ENCODE measurements at regions of chr5 and their contacts with region 1.

Region 1: GRCh38 chr5:33997331-33997983 is 10.4 kb downstream of the AMACR start:
- DNase-seq: peak; percentile 59
- H3K4me3 ChIP-seq: no peak overlapping the region
- CTCF ChIP-seq: peak; percentile 59

Region 2: DNA sequence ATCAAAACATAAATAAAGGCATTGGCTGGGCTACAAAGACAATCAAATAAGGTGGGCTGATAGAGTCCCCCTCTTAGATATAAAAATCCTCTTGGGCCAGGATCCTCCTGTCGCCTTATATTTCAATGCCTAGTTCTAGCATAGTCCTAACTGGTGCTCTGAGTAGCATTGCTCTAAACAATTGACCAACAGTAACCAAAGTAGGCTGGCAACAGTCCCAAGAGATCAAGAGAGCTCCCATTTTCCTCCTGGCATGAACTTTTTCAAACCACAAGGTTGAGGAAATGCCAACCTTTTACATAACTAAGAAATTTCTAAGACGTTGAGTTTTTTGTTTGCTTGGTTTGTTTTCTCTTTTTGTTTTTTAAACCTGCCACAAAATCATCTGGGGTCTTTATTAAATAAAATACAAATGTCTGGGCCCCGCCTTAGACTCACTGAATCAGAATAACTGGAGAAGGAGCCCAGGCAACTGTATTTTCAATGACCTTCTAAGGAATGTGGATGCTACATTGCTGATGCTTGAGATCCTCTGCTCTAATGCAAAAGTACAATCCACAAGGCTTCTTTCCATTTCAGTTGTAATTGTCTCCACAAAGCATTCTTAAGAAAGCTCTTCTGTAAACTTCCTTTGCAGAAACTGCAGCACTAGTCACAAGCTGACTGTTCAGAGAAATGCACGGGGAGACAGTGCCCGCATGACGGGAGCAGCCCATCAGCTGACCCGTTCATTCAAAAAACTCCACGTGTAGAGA is 15.9 kb before region 1 on chr5:
- CTCF ChIA-PET with region 1: interaction called, 26 read pairs
- POLR2A ChIA-PET with region 1: no interaction called
- DNase-seq: no peak
- H3K4me3 ChIP-seq: no peak overlapping the region
- CTCF ChIP-seq: no peak

Region 3: DNA sequence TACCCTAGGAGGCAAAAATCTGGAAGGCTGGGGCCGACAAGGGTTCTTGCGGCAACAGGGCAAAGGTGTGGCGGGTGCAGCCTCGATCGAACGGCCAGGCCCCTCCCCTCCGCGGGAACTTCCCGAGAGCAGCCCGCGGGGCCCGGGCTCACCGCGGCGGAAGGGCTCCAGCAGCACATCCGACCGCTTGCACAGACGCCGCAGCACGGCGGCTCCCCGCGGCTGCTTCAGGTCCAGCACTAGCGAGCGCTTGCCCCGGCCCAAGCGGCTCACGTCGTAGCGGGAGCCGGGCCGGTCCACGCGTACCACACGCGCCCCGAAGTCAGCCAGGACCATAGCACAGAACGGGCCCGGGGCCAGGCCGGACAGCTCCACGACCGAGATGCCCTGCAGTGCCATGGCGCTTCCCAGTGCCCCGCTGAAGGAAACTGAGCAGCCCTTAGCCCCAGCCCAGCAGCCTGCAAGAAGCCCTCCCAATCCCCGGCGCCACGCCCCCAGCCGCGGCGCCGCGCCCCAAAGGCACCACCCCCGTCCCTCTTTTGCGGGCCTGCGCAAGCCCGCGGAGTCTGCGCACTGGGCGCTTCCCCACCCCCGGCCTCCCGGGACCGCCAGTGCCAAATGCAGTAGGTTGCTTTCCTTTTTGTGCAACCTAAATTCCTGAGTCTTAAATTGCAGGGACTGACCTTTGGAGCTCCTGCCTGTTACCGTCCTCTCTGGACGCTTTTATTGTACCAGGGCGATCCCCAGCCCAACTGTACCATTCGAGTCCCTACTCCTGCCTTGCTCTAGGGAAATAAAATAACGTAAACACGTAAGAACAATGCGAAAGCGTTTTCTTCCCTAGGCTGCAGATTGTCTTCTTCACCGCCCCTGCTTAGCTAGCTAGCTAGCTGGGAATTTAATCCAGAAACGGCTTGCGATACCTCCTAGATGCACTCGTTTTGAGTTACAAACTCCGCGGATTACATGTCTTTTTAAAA is 10.5 kb after region 1 on chr5 and contains the start of gene AMACR:
- CTCF ChIA-PET with region 1: interaction called, 36 read pairs
- POLR2A ChIA-PET with region 1: interaction called, 9 read pairs
- DNase-seq: peak; percentile 33
- H3K4me3 ChIP-seq: peak within 1 kb of the TSS; percentile 75
- CTCF ChIP-seq: peak; percentile 14

Region 4: DNA sequence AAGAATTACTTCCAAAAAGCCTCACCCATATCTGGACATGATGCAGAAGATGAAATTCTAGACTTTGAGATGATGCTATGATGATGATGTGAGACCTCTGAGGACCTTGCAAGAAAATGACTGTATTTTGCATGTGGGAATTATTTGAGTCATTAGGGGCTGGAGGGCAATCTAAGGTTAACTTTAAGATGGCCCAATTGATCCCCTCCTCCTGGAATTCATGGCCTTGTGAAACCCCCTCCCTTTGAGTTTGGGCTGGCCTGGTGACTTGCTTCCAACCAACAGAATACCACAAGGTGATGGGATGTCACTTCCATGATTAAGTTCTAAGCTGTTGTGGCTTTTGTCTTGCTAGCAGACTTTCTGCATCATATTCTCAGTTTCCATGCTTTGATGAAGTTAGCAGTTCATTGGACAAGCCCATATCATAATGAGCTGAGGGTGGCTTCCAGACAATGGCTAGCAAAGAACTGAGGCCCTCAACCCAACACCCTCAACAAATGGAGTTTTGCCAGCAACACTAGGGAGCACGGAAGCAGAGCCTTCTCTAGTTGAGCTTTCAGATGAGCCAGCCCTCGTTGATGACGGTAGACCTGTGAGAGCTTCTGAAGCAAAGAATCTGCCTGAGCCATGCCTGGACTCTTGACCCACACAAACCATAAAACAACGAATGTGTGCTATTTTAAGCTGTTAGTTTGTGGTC is 17.8 kb after region 1 on chr5:
- CTCF ChIA-PET with region 1: interaction called, 16 read pairs
- POLR2A ChIA-PET with region 1: no interaction called
- DNase-seq: no peak
- H3K4me3 ChIP-seq: no peak overlapping the region
- CTCF ChIP-seq: no peak

Region 5: DNA sequence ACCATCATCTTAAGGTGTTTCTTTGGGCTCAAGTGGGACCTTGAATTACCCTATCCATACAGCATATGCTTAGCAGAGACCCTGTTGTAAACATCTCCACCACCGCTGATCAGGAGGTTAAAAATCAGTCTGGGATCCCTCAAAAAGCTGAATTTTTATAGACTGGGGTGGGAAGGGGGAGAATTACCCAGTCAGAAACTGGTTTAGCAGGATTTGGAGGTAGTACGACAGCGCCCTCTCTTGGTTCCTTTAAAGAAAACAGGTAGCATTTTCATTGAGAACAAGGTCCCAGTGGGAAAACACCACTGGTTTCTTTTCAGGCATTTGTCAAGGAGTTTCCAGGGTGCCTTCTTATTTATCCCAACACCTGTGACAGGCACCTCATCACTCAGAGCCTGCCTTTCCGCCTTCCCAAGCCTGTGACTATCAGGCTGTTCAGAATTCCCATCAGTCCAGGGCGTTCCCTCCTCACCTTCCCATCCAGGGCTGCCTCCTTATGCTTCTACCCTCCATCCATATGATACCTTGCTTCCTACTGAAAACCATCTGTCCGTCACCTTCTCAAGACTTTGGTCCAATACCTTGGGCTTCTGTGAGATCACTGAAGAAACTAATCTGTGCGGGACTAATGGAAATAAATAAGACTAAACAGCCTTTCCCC is 454.8 kb after region 1 on chr5:
- CTCF ChIA-PET with region 1: interaction called, 51 read pairs
- POLR2A ChIA-PET with region 1: no interaction called
- DNase-seq: no peak
- H3K4me3 ChIP-seq: no peak overlapping the region
- CTCF ChIP-seq: peak; percentile 53

Region 6: DNA sequence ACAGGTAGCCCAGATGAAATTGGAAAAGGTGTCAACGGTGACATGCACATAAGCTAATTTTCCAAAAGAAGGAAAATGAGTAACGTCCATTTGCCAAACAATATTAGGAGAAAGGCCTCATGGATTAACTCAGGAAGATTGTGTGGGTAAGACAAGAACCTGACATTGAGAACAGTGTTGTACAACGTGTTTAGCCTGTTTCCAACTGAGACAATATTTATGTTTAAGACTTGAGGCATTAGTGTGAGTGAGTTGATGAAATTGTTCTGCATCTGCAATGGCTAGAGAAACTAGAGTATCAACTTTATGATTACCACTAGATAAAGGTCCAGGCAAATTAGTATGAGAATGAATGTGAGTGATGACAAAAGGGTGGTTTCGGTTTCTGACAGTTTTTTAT is 467.4 kb after region 1 on chr5:
- CTCF ChIA-PET with region 1: interaction called, 33 read pairs
- POLR2A ChIA-PET with region 1: no interaction called
- DNase-seq: no peak
- H3K4me3 ChIP-seq: no peak overlapping the region
- CTCF ChIP-seq: no peak